ENCODE measurements at regions of chr7 and their contacts with region 1.

Region 1: GRCh38 chr7:75866489-75867389 is 12.1 kb upstream of the RHBDD2 start:
- DNase-seq: peak; percentile 17 to 62 (median 37)
- ATAC-seq: peak; percentile 89
- H3K4me3 ChIP-seq: no peak overlapping the region
- H3K4me3 Mint-ChIP-seq: no peak overlapping the region
- H3K27ac ChIP-seq: no peak overlapping the region
- H3K27ac Mint-ChIP-seq: no peak overlapping the region
- H3K4me1 ChIP-seq: no peaks in the 10 kb centered on the region
- H3K4me1 Mint-ChIP-seq: peaks cover 0 to 13% (median 0%) of the 10 kb centered on the region in 7 donors
- H3K27me3 ChIP-seq: no peaks in the 10 kb centered on the region
- H3K27me3 Mint-ChIP-seq: peaks cover 5 to 8% (median 7%) of the 10 kb centered on the region in 5 donors

Region 2: DNA sequence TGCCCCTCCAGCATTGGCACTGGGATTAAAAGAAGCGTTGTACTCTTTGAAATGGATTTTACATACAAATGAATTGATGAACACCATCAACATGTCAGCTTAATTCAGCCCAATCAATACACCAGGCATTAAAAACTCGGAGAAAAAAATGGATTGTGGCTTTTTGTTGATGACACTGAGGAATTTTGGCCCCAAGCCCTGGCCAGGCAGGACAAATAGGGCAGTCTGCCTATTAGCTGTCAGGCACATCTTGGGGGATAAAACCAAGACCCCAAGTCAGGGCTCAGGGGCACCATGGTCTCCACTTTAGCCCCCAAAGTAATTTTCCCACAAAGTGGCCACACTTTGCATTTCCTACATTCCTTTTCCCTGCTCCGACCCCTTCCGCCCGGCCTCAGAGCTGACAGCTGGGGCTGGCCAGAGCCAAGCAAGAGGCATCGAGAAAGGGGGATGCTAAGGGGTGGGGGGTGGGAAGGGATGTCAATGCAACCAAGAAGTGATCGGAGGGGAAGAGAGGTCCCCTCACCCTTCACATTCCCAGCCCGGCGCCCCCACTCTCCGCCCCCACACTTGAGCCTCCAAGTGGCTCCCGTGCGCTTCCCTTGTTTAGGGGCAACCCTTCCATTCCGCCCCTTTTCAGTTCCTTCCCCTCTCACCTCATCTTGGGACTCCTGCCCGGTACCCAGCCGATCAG is 128.7 kb before region 1 on chr7:
- CTCF ChIA-PET with region 1: no interaction called
- POLR2A ChIA-PET with region 1: no interaction called
- intact Hi-C with region 1: no loop called
- DNase-seq: peak in 1 of 9 donors; percentile 4
- ATAC-seq: no peak
- H3K4me3 ChIP-seq: peak overlapping the region; percentile 74
- H3K4me3 Mint-ChIP-seq: peak overlapping the region; percentile 82 to 96 (median 88)
- H3K27ac ChIP-seq: peak overlapping the region; percentile 80
- H3K27ac Mint-ChIP-seq: peak overlapping the region in 7 of 9 donors; percentile 62 to 86 (median 73)
- H3K4me1 ChIP-seq: peaks cover 4 to 15% of the 10 kb centered on the region in 2 donors
- H3K4me1 Mint-ChIP-seq: peaks cover 5 to 19% (median 13%) of the 10 kb centered on the region in 7 donors
- H3K27me3 ChIP-seq: no peaks in the 10 kb centered on the region
- H3K27me3 Mint-ChIP-seq: peaks cover 0 to 36% (median 5%) of the 10 kb centered on the region in 5 donors

Region 3: DNA sequence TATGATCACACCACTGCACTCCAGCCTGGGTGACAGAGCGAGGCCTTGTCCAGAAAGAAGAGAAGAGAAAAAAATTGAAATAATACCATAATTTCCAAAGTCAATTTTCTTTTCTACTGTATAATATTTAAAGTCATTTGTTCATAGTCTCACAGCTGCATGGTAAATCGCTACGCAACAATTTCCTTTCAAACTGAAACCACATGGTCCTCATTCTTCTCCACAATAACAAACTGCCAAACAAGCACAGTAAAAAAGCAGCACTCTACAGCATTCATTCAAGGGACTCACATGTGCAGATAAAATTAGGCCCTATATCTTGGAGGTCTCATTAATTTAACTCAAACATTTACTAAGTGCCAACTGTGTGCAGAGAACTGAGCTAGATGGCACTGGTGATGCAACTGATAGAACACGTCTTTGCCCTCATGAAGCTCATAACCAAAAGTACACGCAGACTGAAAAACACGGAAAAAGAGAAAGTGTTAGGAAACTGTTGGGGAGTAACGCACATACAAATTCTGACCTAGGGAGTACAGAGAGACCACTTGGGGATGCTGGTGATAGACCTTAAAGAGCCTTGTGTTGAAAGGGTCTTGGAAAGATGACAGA is 266.5 kb after region 1 on chr7:
- CTCF ChIA-PET with region 1: interaction called, 5 read pairs
- POLR2A ChIA-PET with region 1: no interaction called
- intact Hi-C with region 1: loop called in 1 of 2 experiments (anchors 5 kb)
- DNase-seq: peak in 6 of 9 donors; percentile 11 to 50 (median 26)
- ATAC-seq: peak; percentile 69
- H3K4me3 ChIP-seq: peak overlapping the region; percentile 28
- H3K4me3 Mint-ChIP-seq: peak overlapping the region; percentile 59 to 95 (median 81)
- H3K27ac ChIP-seq: peak overlapping the region; percentile 41
- H3K27ac Mint-ChIP-seq: peak overlapping the region; percentile 88 to 99 (median 94)
- H3K4me1 ChIP-seq: peaks cover 0 to 13% of the 10 kb centered on the region in 2 donors
- H3K4me1 Mint-ChIP-seq: peaks cover 28 to 49% (median 40%) of the 10 kb centered on the region in 7 donors
- H3K27me3 ChIP-seq: no peaks in the 10 kb centered on the region
- H3K27me3 Mint-ChIP-seq: no peaks in the 10 kb centered on the region

Measured in naive thymus-derived CD4-positive, alpha-beta T cell (primary cell).